ENCODE measurements at regions of chr5 and their contacts with region 1.

Region 1: DNA sequence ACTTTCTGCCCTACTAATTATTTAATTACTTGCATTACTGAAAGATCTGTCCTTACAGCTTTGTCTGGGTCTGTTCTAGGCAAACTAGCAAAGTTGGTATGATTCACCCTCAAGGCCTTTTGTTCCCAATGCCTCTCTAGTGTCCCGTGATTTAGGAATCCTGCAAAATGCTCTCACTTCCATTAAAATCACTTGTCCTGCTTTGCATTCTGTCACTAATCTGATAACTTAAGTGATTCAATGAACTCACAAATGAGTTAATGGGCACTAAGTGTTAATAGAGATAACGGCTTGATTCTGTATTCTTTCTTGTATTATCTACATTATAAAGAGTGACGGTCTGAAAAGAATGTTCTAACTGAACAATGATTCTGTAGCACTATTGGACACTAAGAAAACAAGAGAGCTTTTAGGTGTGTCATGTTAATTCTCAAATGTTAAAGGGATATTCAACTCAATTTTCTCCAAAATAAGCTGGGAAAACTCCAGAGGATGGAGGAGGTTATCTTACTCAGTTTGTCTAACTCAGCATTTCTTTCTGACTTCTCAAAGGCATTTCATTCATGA is 697.3 kb downstream of the CETN3 start:
- DNase-seq: no peak
- CTCF ChIP-seq: no peak

Region 2: GRCh38 chr5:89604342-89604741 is 107.9 kb before region 1 on chr5:
- CTCF ChIA-PET with region 1: no interaction called
- POLR2A ChIA-PET with region 1: no interaction called
- DNase-seq: no peak
- CTCF ChIP-seq: no peak

Region 3: DNA sequence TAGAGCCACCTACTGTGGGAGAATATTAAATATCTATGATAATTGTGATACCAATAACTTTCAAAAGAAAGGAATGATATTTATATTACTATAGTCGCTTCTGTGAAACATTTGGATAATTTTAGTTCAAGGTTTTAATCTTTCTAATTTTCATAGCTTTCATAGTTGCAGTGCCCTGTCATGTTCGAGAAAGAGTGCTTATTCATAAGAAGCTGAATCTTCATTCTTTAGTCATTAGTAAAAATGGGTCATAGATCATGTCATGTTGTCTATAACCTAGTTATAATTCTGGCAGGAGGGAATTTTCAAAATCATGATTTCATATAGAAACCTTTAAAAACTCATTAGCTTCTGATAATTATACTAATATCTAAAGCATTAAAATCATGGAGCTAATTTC is 11.7 kb after region 1 on chr5:
- CTCF ChIA-PET with region 1: interaction called, 12 read pairs
- POLR2A ChIA-PET with region 1: no interaction called
- DNase-seq: no peak
- CTCF ChIP-seq: no peak

Measured in GM10248 (cell line).